GM23248 (cell line): ENCODE measurements at regions of chr17 and their contacts with region 1.

Region 1: GRCh38 chr17:27601069-27601975 is 29.7 kb upstream of the LGALS9 start:
- DNase-seq: peak; percentile 72
- H3K4me3 ChIP-seq: no peak overlapping the region
- H3K27ac ChIP-seq: no peak overlapping the region
- H3K4me1 ChIP-seq: no peaks in the 10 kb centered on the region
- H3K27me3 ChIP-seq: no peaks in the 10 kb centered on the region

Region 2: DNA sequence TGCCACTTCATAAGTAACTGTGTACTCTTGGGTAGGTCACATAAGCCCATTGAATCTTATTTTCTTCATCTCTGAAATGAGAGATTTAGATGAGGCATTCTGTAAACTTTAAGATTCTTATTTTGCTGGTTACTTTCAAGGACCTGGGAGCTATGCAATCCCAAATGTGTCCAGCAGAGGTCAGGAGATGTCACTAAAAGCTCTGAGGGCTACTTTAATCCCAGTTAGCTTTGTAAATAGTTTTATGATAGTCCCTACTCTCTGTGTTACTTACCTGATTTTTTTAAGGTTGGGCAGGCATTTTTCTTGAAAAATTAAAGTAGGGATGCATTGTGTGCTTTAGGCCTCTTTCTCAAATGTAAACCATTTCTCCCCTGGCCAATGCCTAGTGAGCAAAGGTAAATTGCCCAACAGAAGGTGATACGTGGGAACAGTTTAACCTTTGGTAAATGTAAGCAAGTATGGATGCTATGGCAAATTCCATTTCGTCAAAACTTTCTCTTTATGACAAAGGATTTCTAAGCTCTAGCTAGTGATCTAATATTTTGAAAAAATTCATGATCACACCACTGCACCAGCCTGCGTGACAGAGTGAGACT is 364.5 kb before region 1 on chr17:
- in situ Hi-C with region 1: loop called (anchors 10 kb)
- DNase-seq: peak; percentile 67
- H3K4me3 ChIP-seq: no peak overlapping the region
- H3K27ac ChIP-seq: no peak overlapping the region
- H3K4me1 ChIP-seq: no peaks in the 10 kb centered on the region; the same call in 1 of the 2 replicates
- H3K27me3 ChIP-seq: no peaks in the 10 kb centered on the region

Region 3: DNA sequence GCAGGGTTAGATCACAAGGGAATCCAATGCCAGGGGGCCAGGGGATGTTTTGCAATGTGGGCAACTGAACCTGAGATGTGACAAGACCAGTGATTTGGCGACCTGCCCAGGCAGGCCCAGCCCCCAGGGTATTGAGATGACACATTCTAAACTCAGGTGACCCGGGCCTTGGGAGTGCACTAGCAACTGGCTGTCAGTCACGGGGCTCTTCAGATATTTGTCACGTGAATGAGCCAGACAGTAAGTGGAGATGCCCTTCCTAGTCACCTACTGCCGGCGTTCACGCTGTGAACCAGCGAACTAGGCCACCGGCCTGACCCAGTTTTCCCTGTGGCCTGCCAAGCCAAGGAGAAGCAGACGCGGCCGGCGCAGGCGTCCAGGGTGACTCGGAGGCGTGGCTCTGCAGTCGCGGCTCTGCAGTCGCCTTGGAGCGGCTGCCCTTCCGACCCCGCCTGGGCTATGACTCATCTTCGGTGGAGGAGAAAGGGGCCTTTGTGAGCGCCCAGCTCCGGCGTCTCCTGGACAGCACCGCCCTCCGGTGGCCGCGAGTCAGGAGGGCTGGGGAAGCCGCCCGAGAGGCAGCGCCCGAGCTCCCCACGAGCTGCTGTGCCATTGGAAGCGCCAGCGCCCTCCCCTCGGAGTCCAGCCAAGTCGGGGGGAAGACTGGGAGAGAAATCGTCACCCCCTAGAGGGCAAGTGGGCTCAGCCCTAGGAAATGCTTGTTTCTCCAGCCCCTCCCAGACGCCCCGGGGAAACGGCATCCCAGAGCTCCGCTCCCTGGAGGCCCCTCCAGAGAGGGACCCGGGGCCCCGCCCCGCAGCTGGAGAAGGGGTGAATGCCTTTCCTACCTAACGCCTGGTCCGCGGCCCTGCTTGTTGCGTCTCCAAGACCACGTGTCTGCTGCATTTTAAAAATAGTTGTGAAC is 268.6 kb before region 1 on chr17:
- in situ Hi-C with region 1: loop called (anchors 10 kb)
- DNase-seq: peak; percentile 99
- H3K4me3 ChIP-seq: peak overlapping the region; percentile 72
- H3K27ac ChIP-seq: peak overlapping the region; percentile 72
- H3K4me1 ChIP-seq: 0 out of 2 replicates have a peak, but pooled peaks cover 6% of the 10 kb centered on the region
- H3K27me3 ChIP-seq: no peaks in the 10 kb centered on the region

Region 4: DNA sequence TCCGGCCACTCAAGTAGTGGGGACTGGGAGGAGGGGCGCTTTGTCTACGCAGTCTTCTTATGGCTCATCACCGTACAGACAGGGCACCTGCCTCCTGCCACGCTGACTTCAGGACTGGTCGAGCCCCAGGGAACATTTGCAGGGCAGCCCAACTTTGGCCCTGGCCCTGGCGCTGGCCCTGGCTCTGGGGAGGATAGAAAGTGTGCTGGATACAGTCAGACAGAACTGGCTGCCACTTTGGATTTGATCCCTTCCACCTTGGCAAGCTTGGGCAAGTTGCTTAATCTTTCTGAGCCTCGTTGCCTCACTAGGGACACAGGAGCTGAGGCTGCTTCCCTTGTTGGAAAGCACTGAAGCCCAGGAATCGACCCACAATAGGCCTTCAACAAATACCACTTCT is 43.3 kb after region 1 on chr17:
- in situ Hi-C with region 1: no loop called
- DNase-seq: peak; percentile 14
- H3K4me3 ChIP-seq: no peak overlapping the region
- H3K27ac ChIP-seq: no peak overlapping the region
- H3K4me1 ChIP-seq: no peaks in the 10 kb centered on the region
- H3K27me3 ChIP-seq: no peaks in the 10 kb centered on the region

Region 5: GRCh38 chr17:27747462-27748359 is 146.4 kb after region 1 on chr17:
- in situ Hi-C with region 1: no loop called
- DNase-seq: no peak
- H3K4me3 ChIP-seq: no peak overlapping the region
- H3K27ac ChIP-seq: no peak overlapping the region
- H3K4me1 ChIP-seq: no peaks in the 10 kb centered on the region
- H3K27me3 ChIP-seq: no peaks in the 10 kb centered on the region